Mammary epithelial cell (primary cell): ENCODE measurements at regions of chr14 and their contacts with region 1.

Region 1: GRCh38 chr14:22375321-22375930 is 213.6 kb downstream of the DAD1 start:
- DNase-seq: peak; percentile 38
- H3K4me3 ChIP-seq: no peak overlapping the region
- H3K27ac ChIP-seq: no peak overlapping the region
- H3K4me1 ChIP-seq: peaks cover 1% of the 10 kb centered on the region
- H3K27me3 ChIP-seq: no peaks in the 10 kb centered on the region
- CTCF ChIP-seq: peak; percentile 53 to 69

Region 2: DNA sequence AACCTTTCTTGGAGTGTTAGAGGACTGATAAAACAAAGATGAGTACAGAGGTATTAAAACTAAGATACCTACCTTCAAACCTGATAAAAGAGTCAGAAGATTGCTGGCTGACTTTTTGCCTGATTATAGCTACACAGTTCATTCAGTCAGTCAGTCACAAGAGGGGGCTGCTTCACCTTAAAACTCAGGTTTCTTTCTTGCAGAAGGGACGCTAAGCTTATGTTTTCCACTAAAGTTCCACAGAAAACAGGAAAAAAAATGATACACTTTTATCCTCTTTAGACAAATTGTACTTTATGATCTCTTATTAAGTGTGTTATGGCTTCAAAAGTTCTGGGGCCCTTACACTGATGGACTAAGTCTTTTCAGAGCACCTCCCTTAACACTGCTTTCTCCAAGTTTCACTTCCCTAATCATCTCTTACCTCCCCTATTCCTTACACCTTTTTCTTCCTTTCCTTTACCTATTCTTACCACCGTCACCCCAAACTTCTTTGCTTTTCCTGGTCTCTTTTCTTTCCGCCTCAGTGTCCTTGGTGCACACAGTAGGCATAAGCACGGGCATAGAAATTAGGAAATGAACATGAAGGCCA is 253.1 kb before region 1 on chr14:
- CTCF ChIA-PET with region 1: no interaction called
- dilution Hi-C with region 1: no loop called
- in situ Hi-C with region 1: no loop called
- intact Hi-C with region 1: loop called (anchors 10 kb)
- DNase-seq: peak; percentile 24
- H3K4me3 ChIP-seq: no peak overlapping the region
- H3K27ac ChIP-seq: no peak overlapping the region
- H3K4me1 ChIP-seq: peaks cover 6% of the 10 kb centered on the region
- H3K27me3 ChIP-seq: peaks cover 2% of the 10 kb centered on the region
- CTCF ChIP-seq: peak; percentile 29 to 53

Region 3: GRCh38 chr14:22221508-22221907 is 153.9 kb before region 1 on chr14:
- CTCF ChIA-PET with region 1: interaction called, 24 read pairs
- dilution Hi-C with region 1: no loop called
- in situ Hi-C with region 1: no loop called
- intact Hi-C with region 1: loop called (anchors 1 kb)
- DNase-seq: peak; percentile 13
- H3K4me3 ChIP-seq: no peak overlapping the region
- H3K27ac ChIP-seq: no peak overlapping the region
- H3K4me1 ChIP-seq: peaks cover 9% of the 10 kb centered on the region
- H3K27me3 ChIP-seq: no peaks in the 10 kb centered on the region
- CTCF ChIP-seq: peak; percentile 34 to 49

Region 4: GRCh38 chr14:22276913-22277816 is 98.3 kb before region 1 on chr14:
- CTCF ChIA-PET with region 1: interaction called, 8 read pairs
- dilution Hi-C with region 1: no loop called
- in situ Hi-C with region 1: no loop called
- intact Hi-C with region 1: loop called (anchors 1 kb)
- DNase-seq: no peak
- H3K4me3 ChIP-seq: no peak overlapping the region
- H3K27ac ChIP-seq: no peak overlapping the region
- H3K4me1 ChIP-seq: no peaks in the 10 kb centered on the region
- H3K27me3 ChIP-seq: no peaks in the 10 kb centered on the region
- CTCF ChIP-seq: peak; percentile 63 to 78

Region 5: GRCh38 chr14:22303589-22304195 is 71.7 kb before region 1 on chr14:
- CTCF ChIA-PET with region 1: no interaction called
- dilution Hi-C with region 1: no loop called
- in situ Hi-C with region 1: loop called in 1 of 2 experiments (anchors 10 kb)
- intact Hi-C with region 1: no loop called
- DNase-seq: no peak
- H3K4me3 ChIP-seq: no peak overlapping the region
- H3K27ac ChIP-seq: no peak overlapping the region
- H3K4me1 ChIP-seq: no peaks in the 10 kb centered on the region
- H3K27me3 ChIP-seq: no peaks in the 10 kb centered on the region
- CTCF ChIP-seq: peak; percentile 49 to 52

Region 6: DNA sequence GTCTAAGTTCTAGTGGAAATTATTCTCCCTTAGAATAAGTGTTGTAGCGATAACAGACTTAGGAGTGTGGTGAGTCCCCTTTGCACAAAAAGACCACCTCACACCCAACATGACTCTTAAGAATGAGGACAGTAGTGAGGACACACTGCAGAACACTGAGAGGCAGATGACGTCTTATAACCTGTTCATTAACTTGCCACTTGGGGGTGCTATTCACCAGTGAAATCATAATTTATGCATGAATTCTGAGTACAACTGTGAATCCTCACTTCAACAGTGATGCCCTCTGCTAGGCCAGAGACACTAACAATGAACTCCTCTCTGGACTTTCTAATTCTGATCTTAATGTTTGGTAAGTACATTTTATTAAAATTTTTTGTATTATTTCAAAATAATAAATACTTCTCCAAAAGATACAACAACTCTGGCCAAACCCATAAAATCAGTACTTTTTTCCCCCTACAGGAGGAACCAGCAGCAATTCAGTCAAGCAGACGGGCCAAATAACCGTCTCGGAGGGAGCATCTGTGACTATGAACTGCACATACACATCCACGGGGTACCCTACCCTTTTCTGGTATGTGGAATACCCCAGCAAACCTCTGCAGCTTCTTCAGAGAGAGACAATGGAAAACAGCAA is 61.1 kb before region 1 on chr14:
- CTCF ChIA-PET with region 1: interaction called, 9 read pairs
- dilution Hi-C with region 1: no loop called
- in situ Hi-C with region 1: loop called (anchors 5 to 10 kb)
- intact Hi-C with region 1: loop called (anchors 1 kb)
- DNase-seq: peak; percentile 51
- H3K4me3 ChIP-seq: no peak overlapping the region
- H3K27ac ChIP-seq: no peak overlapping the region
- H3K4me1 ChIP-seq: peaks cover 7% of the 10 kb centered on the region
- H3K27me3 ChIP-seq: no peaks in the 10 kb centered on the region
- CTCF ChIP-seq: peak; percentile 67 to 71

Region 7: DNA sequence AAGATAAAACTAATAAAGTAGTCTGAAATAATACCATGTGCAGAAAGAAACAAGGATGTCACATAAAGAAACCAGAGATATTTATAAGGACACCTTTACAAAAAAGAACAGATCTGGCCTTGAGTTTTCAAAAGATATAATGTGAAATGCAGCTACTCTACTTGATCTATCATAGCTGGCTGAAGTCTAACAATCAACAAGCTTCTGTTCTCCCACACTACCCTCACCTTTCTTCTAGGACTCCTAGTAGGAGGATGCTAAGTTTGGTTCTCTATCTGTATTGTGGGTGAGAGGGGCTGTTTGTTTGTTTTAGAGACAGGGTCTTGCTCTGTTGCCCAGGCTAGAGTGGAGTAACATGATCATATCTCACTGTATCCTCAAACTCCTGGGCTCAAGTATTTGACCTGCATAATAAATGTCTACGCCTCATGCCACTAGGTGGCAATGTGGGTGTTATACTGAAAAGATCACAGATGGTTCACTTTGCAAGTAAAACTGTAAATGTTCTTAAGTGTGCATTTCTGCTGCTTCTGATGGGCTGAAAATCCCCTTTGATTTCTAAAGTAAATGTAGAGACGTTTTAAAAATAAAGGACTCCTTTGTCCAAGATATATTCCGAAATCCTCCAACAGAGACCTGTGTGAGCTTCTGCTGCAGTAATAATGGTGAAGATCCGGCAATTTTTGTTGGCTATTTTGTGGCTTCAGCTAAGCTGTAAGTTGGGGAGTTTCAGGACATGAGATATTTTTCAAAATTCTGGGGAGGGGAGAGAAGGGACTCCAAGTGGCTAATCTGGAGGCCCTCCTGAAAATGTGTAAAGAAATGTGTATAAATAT is 55.7 kb before region 1 on chr14:
- CTCF ChIA-PET with region 1: interaction called, 9 read pairs
- dilution Hi-C with region 1: no loop called
- in situ Hi-C with region 1: loop called in 1 of 2 experiments (anchors 5 kb)
- intact Hi-C with region 1: loop called (anchors 1 kb)
- DNase-seq: peak; percentile 39
- H3K4me3 ChIP-seq: no peak overlapping the region
- H3K27ac ChIP-seq: no peak overlapping the region
- H3K4me1 ChIP-seq: peaks cover 7% of the 10 kb centered on the region
- H3K27me3 ChIP-seq: no peaks in the 10 kb centered on the region
- CTCF ChIP-seq: peak; percentile 61 to 71

Region 8: GRCh38 chr14:22432348-22432976 is 57.0 kb after region 1 on chr14:
- CTCF ChIA-PET with region 1: no interaction called
- dilution Hi-C with region 1: no loop called
- in situ Hi-C with region 1: no loop called
- intact Hi-C with region 1: no loop called
- DNase-seq: peak; percentile 87
- H3K4me3 ChIP-seq: no peak overlapping the region
- H3K27ac ChIP-seq: no peak overlapping the region
- H3K4me1 ChIP-seq: peaks cover 17% of the 10 kb centered on the region
- H3K27me3 ChIP-seq: no peaks in the 10 kb centered on the region
- CTCF ChIP-seq: no peak